BJ (cell line): ENCODE measurements at regions of chr19 and their contacts with region 1.

Region 1: GRCh38 chr19:14405758-14406644 is 13.1 kb downstream of the DDX39A start:
- DNase-seq: no peak
- H3K4me3 ChIP-seq: no peak overlapping the region
- H3K27me3 ChIP-seq: no peaks in the 10 kb centered on the region
- CTCF ChIP-seq: peak; percentile 78

Region 2: GRCh38 chr19:14198384-14199376 is 207.3 kb before region 1 on chr19:
- CTCF ChIA-PET with region 1: interaction called, 18 read pairs
- POLR2A ChIA-PET with region 1: no interaction called
- DNase-seq: no peak
- H3K4me3 ChIP-seq: no peak overlapping the region
- H3K27me3 ChIP-seq: 0 out of 2 replicates have a peak, but pooled peaks cover 2% of the 10 kb centered on the region
- CTCF ChIP-seq: peak; percentile 23; the same call in 1 of the 2 replicates

Region 3: GRCh38 chr19:14366498-14366915 is 39.5 kb before region 1 on chr19:
- CTCF ChIA-PET with region 1: interaction called, 16 read pairs
- POLR2A ChIA-PET with region 1: no interaction called
- DNase-seq: no peak
- H3K4me3 ChIP-seq: no peak overlapping the region
- H3K27me3 ChIP-seq: no peaks in the 10 kb centered on the region
- CTCF ChIP-seq: no peak

Region 4: DNA sequence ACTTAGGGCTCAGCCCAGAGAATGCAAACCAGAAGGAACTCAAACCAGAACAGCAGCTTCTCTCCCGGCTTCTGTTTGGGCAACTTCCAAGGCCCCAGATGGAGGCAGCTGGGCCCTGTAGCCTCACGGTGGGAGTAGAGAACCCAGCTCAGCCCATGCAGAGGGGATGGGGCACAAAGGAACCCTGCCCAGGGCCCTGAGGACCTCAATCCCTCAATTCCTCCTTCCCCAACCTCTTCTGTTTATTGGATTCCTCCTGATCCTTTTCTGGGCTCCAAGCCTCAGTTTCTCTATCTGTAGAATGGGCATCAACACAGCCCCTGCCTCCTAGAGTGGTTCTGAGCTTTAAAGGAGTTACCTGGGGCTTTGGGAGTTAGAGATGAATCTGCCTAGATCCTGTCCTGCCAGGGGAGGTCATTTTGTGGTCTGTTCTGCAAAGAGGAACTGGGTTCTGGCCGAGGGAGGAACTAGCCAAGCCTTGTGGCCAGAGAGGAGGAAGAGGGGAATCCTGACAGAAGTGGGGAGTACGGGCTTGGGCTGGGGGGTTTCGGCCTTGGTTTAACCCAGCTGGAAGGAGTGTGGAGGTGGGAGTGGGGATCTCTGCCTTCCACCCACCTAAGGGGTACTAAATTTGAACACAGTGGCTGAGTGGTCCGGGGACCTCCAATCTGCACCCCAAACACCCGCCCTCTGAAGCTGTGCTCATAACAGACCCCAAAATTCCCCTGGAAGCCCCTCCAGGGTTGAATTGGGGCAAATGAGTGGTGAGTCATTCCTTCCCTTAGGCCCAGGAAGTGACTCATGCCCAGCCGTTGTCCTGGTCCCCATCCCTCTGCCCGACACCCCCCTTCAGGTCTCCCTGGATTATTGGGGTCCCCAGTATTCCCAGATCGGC is 22.1 kb before region 1 on chr19:
- CTCF ChIA-PET with region 1: interaction called, 11 read pairs
- POLR2A ChIA-PET with region 1: no interaction called
- DNase-seq: no peak
- H3K4me3 ChIP-seq: peak overlapping the region; percentile 12
- H3K27me3 ChIP-seq: no peaks in the 10 kb centered on the region
- CTCF ChIP-seq: peak; percentile 21; the same call in 1 of the 2 replicates